Posterior vena cava (tissue), 2 donors: ENCODE measurements at regions of chr9 and their contacts with region 1.

Region 1: DNA sequence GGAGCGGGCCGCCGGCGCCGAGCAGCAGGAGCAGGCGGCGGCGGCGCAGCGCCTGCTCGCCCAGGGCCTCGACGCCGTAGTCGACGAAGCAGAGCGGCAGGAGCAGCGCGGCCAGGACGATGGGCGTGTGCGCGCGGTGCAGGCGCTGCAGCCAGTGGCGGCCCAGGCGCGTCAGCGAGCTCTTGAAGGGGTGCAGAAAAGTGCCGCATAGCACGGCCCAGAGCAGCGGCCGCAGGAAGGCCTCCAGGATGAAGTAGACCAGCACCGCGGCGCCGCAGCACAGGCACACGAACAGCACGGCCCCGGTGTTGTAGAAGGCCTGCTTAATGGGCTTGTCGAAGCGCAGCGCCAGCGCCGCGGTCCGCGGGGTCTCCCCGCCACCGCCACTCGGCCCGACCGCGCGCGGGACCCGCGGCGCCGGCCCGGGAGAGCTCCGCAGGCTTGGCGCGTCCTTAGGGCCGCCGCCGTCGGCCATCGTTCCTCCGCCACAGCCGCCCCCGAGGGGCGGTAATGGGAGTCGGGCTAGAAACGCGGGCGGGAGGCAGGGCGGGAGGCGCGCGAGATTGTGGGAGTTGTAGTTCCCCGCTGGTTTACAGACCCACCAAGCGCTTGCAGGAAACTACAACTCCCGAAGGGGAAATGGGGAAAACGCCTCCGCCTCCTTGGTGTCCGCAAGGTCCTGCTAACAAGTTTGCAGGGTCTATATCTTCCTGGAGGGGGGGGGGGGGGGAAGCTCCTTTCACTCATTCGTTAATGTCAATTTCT is at the start of gene TMEM245:
- DNase-seq: peak; percentile 99
- total RNA-seq, gene TMEM245: 44.9 to 52.3 TPM

Region 2: GRCh38 chr9:108913391-108913790 is 206.2 kb before region 1 on chr9:
- intact Hi-C with region 1: no loop called
- DNase-seq: no peak

Region 3: DNA sequence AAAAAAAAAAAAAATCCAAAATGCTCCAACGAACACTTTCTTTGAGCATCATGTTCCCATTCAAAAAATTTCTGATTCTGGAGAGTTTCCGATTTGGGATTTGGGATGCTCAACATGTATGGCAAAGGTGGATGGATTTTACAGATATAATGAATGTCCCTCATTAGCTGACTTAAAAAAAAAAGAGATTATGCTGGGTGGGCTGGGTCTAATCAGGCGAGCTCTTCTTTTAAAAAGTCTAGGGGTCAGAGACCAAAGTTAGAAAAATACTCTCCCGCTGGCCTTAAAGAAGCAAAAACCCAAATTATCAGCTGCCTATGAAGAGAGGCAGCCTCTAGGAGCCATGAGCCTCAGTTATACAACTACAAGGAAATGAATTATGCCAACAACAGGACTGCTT is 91.2 kb before region 1 on chr9:
- intact Hi-C with region 1: loop called in 1 of 2 experiments (anchors 2 kb)
- DNase-seq: no peak